ENCODE measurements at regions of chr12 and their contacts with region 1.

Region 1: DNA sequence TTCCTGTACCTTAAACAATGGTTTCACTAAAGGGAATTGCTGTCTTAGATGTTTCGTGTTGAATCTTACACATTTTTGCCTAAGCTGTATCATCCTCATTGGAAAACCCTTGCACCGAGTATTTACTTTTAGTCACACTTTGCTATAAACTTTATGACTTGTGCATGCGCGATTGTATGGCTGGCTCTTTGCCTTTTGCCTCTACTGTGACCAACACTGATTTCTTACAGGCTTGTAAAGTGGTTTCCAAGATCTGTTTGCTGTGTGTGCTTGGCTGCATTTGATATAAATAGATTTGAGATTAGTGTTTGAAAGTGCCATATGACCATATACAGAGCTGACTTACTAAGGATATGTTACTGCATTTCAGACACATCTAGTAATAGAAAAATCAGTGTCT is 40.5 kb downstream of the RASSF3 start:
- DNase-seq: no peak
- ATAC-seq: no peak
- H3K4me3 ChIP-seq: no peak overlapping the region
- H3K4me3 Mint-ChIP-seq: peak overlapping the region in 2 of 3 donors; percentile 13 to 41
- H3K27ac ChIP-seq: no peak overlapping the region
- H3K27ac Mint-ChIP-seq: peak overlapping the region; percentile 75 to 76
- H3K4me1 ChIP-seq: peaks cover 26 to 76% of the 10 kb centered on the region in 2 experiments
- H3K4me1 Mint-ChIP-seq: peaks cover 83 to 89% (median 88%) of the 10 kb centered on the region in 3 donors
- H3K27me3 ChIP-seq: no peaks in the 10 kb centered on the region
- H3K27me3 Mint-ChIP-seq: no peaks in the 10 kb centered on the region

Region 2: DNA sequence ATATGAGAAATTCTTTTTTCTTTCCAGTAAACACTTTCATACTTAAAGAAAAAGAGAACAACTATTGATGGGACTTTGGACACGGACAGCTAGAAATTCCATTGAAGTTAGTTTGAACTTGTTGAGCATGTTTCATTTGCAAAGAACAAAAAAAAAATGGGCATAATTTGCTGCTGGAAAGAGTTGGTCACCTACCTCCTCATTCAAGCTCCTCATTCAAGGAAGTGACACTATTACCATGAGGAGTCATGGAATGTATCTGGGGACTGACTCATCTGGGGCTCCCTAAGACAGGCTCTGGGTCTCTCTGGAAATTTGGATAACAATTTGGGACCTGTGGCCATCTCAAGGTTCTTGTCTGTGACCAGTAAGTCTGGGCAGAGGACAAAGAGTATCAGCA is 479.0 kb before region 1 on chr12:
- CTCF ChIA-PET with region 1: no interaction called
- POLR2A ChIA-PET with region 1: no interaction called
- DNase-seq: no peak
- ATAC-seq: no peak
- H3K4me3 ChIP-seq: no peak overlapping the region
- H3K4me3 Mint-ChIP-seq: no peak overlapping the region
- H3K27ac ChIP-seq: no peak overlapping the region
- H3K27ac Mint-ChIP-seq: no peak overlapping the region
- H3K4me1 ChIP-seq: no peaks in the 10 kb centered on the region
- H3K4me1 Mint-ChIP-seq: no peaks in the 10 kb centered on the region
- H3K27me3 ChIP-seq: no peaks in the 10 kb centered on the region
- H3K27me3 Mint-ChIP-seq: no peaks in the 10 kb centered on the region

Region 3: GRCh38 chr12:64600189-64600588 is 50.6 kb before region 1 on chr12:
- CTCF ChIA-PET with region 1: no interaction called
- POLR2A ChIA-PET with region 1: no interaction called
- DNase-seq: no peak
- ATAC-seq: no peak
- H3K4me3 ChIP-seq: no peak overlapping the region
- H3K4me3 Mint-ChIP-seq: peak overlapping the region in 2 of 3 donors; percentile 6 to 72
- H3K27ac ChIP-seq: no peak overlapping the region
- H3K27ac Mint-ChIP-seq: peak overlapping the region; percentile 28 to 36
- H3K4me1 ChIP-seq: peaks cover 26 to 27% of the 10 kb centered on the region in 2 experiments
- H3K4me1 Mint-ChIP-seq: peaks cover 43 to 48% (median 45%) of the 10 kb centered on the region in 3 donors
- H3K27me3 ChIP-seq: no peaks in the 10 kb centered on the region
- H3K27me3 Mint-ChIP-seq: no peaks in the 10 kb centered on the region

Region 4: DNA sequence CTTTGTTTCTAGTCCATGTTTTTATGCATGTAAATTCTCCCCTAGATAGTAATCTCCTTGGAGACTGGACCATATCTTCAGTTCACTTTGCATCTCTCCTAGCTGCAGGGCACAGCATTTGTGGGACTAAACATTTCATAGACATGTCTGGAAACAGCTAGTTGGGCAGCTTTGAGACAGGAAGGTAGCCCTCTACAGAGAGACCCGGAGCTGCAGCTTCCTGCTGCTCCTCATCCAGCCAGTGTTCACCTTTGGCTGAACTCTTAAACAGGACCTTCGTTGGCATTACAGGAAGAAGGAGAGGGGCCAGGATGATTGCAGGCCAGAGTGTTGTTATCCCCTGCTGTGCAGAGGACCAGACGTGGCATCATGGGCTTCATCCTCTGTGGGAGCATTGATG is 55.5 kb after region 1 on chr12:
- CTCF ChIA-PET with region 1: no interaction called
- POLR2A ChIA-PET with region 1: interaction called in 1 of 2 experiments, 10 read pairs
- DNase-seq: no peak
- ATAC-seq: no peak
- H3K4me3 ChIP-seq: no peak overlapping the region
- H3K4me3 Mint-ChIP-seq: no peak overlapping the region
- H3K27ac ChIP-seq: no peak overlapping the region
- H3K27ac Mint-ChIP-seq: peak overlapping the region in 1 of 2 donors; percentile 35
- H3K4me1 ChIP-seq: peaks cover 0 to 6% of the 10 kb centered on the region in 2 experiments
- H3K4me1 Mint-ChIP-seq: peaks cover 8 to 16% (median 9%) of the 10 kb centered on the region in 3 donors
- H3K27me3 ChIP-seq: no peaks in the 10 kb centered on the region
- H3K27me3 Mint-ChIP-seq: no peaks in the 10 kb centered on the region

Region 5: GRCh38 chr12:64976131-64976530 is 325.4 kb after region 1 on chr12:
- CTCF ChIA-PET with region 1: no interaction called
- POLR2A ChIA-PET with region 1: no interaction called
- DNase-seq: no peak
- ATAC-seq: no peak
- H3K4me3 ChIP-seq: no peak overlapping the region
- H3K4me3 Mint-ChIP-seq: no peak overlapping the region
- H3K27ac ChIP-seq: no peak overlapping the region
- H3K27ac Mint-ChIP-seq: no peak overlapping the region
- H3K4me1 ChIP-seq: no peaks in the 10 kb centered on the region
- H3K4me1 Mint-ChIP-seq: no peaks in the 10 kb centered on the region
- H3K27me3 ChIP-seq: no peaks in the 10 kb centered on the region
- H3K27me3 Mint-ChIP-seq: peaks cover 12 to 24% of the 10 kb centered on the region in 2 donors